ENCODE measurements at regions of chr17 and their contacts with region 1.

Region 1: GRCh38 chr17:67293251-67294203 is 48.5 kb upstream of the HELZ start:
- DNase-seq: peak; percentile 84
- ATAC-seq: peak; percentile 99
- H3K4me3 Mint-ChIP-seq: no peak overlapping the region
- H3K27ac Mint-ChIP-seq: no peak overlapping the region
- H3K4me1 Mint-ChIP-seq: no peaks in the 10 kb centered on the region
- H3K27me3 Mint-ChIP-seq: no peaks in the 10 kb centered on the region

Region 2: GRCh38 chr17:66715745-66716156 is 577.8 kb before region 1 on chr17:
- CTCF ChIA-PET with region 1: no interaction called
- POLR2A ChIA-PET with region 1: no interaction called
- intact Hi-C with region 1: loop called in 1 of 2 experiments (anchors 10 kb)
- DNase-seq: no peak
- ATAC-seq: peak; percentile 50
- H3K4me3 Mint-ChIP-seq: no peak overlapping the region
- H3K27ac Mint-ChIP-seq: no peak overlapping the region
- H3K4me1 Mint-ChIP-seq: peaks cover 31% of the 10 kb centered on the region
- H3K27me3 Mint-ChIP-seq: no peaks in the 10 kb centered on the region

Region 3: GRCh38 chr17:67221062-67221998 is 72.2 kb before region 1 on chr17:
- CTCF ChIA-PET with region 1: interaction called, 38 read pairs
- POLR2A ChIA-PET with region 1: no interaction called
- intact Hi-C with region 1: loop called (anchors 1 kb)
- DNase-seq: peak; percentile 44
- ATAC-seq: peak; percentile 68
- H3K4me3 Mint-ChIP-seq: no peak overlapping the region
- H3K27ac Mint-ChIP-seq: no peak overlapping the region
- H3K4me1 Mint-ChIP-seq: peaks cover 31% of the 10 kb centered on the region
- H3K27me3 Mint-ChIP-seq: no peaks in the 10 kb centered on the region

Region 4: GRCh38 chr17:67245073-67245755 is 48.3 kb before region 1 on chr17 and contains the start of gene HELZ:
- CTCF ChIA-PET with region 1: interaction called, 3 read pairs
- POLR2A ChIA-PET with region 1: no interaction called
- intact Hi-C with region 1: loop called in 1 of 2 experiments (anchors 1 kb)
- DNase-seq: peak; percentile 79
- ATAC-seq: peak; percentile 71
- H3K4me3 Mint-ChIP-seq: peak within 1 kb of the TSS; percentile 94
- H3K27ac Mint-ChIP-seq: peak within 1 kb of the TSS; percentile 85
- H3K4me1 Mint-ChIP-seq: peaks cover 40% of the 10 kb centered on the region
- H3K27me3 Mint-ChIP-seq: peaks cover 2% of the 10 kb centered on the region
- total RNA-seq, gene HELZ: 55.3 to 58.0 TPM

Measured in activated CD4-positive, alpha-beta T cell treated with anti-CD3 and anti-CD28 coated beads for 36 hours (primary cell).